Gastrocnemius medialis (tissue), 4 donors: ENCODE measurements at regions of chr2 and their contacts with region 1.

Region 1: DNA sequence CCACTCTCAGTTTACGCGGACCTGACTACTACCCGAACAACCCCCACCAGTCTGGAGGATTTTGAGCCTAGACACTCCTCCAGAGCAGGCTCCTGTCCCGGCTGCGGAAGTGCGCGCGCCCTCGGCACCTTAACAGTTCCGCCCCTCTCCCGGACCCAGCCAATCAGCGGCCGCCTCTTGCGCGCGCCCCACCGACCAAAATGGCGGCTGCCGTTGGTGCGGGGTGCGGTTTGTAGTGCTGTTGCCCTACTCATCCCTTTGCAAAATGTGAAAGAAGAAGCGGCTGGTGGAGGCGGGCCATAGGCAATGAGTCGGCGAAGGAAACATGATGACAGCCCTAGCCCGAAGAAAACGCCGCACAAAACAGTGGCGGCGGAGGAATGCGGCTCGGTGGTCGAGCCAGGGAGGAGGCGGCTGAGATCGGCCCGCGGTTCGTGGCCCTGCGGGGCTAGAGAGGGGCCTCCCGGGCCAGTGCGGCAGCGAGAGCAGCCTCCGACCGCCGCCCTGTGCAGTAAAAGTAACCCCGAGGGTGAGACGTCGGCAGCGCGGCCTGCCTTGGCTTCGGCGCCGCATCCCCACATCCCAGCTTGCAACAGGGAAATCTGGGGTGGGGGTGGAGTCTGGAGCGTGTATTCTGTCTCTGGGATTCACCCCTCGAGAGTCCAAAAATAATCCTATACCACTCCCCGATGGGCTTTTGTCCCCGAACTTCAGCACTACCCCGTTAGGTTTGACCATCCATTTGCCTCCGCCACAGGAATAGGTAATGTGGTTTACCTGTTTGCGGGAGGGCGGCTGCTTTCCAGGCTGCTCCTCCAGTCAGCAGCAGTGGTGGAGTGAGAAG is at the start of gene ETAA1:
- DNase-seq: peak; percentile 85 to 88
- ATAC-seq: peak; percentile 98
- H3K4me3 ChIP-seq: peak within 1 kb of the TSS; percentile 83 to 95 (median 89)
- H3K27ac ChIP-seq: peak within 1 kb of the TSS; percentile 82 to 90 (median 90)
- H3K4me1 ChIP-seq: no peaks in the 10 kb centered on the region
- H3K27me3 ChIP-seq: no peaks in the 10 kb centered on the region
- CTCF ChIP-seq: no peak
- POLR2A ChIP-seq: peak; percentile 61 to 65
- total RNA-seq, gene ETAA1: 4.1 to 7.8 (median 4.9) TPM

Region 2: GRCh38 chr2:67463810-67464209 is 66.4 kb after region 1 on chr2:
- in situ Hi-C with region 1: no loop called
- intact Hi-C with region 1: loop called (anchors 5 kb)
- DNase-seq: peak; percentile 15 to 41
- ATAC-seq: peak; percentile 97
- H3K4me3 ChIP-seq: no peak overlapping the region
- H3K27ac ChIP-seq: peak overlapping the region in 2 of 4 donors; percentile 46 to 67
- H3K4me1 ChIP-seq: peaks cover 5 to 11% of the 10 kb centered on the region in 2 donors
- H3K27me3 ChIP-seq: no peaks in the 10 kb centered on the region
- CTCF ChIP-seq: no peak
- POLR2A ChIP-seq: peak in 1 of 2 donors; percentile 16

Region 3: GRCh38 chr2:67476809-67477790 is 79.7 kb after region 1 on chr2:
- in situ Hi-C with region 1: no loop called
- intact Hi-C with region 1: loop called (anchors 5 kb)
- DNase-seq: no peak
- ATAC-seq: no peak
- H3K4me3 ChIP-seq: no peak overlapping the region
- H3K27ac ChIP-seq: no peak overlapping the region
- H3K4me1 ChIP-seq: no peaks in the 10 kb centered on the region
- H3K27me3 ChIP-seq: no peaks in the 10 kb centered on the region
- CTCF ChIP-seq: peak in 1 of 5 experiments; percentile 50
- POLR2A ChIP-seq: no peak